Mammary epithelial cell (primary cell): ENCODE measurements at regions of chr11 and their contacts with region 1.

Region 1: GRCh38 chr11:134110252-134110815 is 41.5 kb downstream of the JAM3 start:
- DNase-seq: no peak
- H3K4me3 ChIP-seq: no peak overlapping the region
- H3K27ac ChIP-seq: no peak overlapping the region
- H3K4me1 ChIP-seq: no peaks in the 10 kb centered on the region
- H3K27me3 ChIP-seq: no peaks in the 10 kb centered on the region
- CTCF ChIP-seq: no peak

Region 2: DNA sequence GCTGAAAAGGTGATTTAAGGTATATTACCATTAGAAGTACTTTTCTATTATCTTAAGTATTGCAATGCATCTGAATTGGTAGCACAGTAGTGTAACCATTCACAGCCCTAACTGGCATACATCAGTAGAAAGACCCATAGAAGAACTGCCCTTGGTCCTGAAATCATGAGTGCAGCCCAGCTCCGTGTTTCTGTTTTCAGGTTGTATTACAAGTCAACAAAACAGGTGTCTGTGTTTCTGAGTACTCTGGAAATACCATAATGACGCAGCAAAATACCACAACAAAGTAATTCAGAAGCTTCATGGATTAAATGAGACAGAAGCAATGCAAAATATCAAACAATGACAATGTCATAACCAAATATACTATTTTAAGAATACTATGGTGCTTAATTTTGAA is 804.3 kb before region 1 on chr11:
- CTCF ChIA-PET with region 1: no interaction called
- dilution Hi-C with region 1: no loop called
- in situ Hi-C with region 1: no loop called
- intact Hi-C with region 1: no loop called
- DNase-seq: peak; percentile 1
- H3K4me3 ChIP-seq: no peak overlapping the region
- H3K27ac ChIP-seq: no peak overlapping the region
- H3K4me1 ChIP-seq: no peaks in the 10 kb centered on the region
- H3K27me3 ChIP-seq: no peaks in the 10 kb centered on the region
- CTCF ChIP-seq: no peak

Region 3: DNA sequence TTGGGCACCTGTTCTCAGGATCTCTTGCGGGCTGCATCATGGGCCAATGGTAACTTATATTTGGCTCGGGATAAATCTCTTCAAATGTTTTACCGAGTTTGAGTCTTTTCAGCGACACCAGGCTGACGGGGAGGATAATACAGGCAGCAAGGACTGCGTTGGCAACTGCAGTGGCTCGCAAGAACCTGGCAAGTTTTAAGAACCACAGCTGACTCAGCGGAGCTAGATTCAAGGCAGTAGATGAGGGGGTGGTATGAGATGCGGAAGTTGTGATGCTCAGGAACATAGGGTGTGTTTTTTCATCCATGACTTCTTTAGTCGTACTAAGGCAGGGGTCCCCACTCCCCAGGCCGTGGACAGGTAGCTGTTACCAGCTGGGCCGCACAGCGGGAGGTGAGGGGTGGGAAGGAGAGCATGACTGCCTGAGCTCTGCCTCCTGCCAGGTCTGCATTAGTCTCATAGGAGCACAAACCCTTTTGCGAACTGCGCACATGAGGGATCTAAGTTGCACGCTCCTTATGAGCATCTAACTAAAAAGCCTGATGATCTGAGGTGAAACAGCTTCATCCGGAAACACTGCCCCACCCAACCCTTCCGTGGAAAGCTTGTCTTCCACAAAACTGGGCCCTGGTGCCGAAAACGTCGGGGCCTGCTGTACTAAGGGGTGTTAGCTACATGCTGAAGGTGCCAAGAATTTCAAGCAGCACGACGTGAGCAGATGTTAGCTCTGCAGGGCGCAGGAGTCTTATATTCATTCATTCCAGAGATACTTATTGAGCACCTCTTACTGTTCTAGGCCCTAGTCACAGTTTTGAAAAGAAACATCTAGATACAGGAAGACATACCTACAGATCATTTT is 47.8 kb before region 1 on chr11:
- CTCF ChIA-PET with region 1: no interaction called
- dilution Hi-C with region 1: loop called (anchors 5 kb)
- in situ Hi-C with region 1: no loop called
- intact Hi-C with region 1: no loop called
- DNase-seq: no peak
- H3K4me3 ChIP-seq: no peak overlapping the region
- H3K27ac ChIP-seq: no peak overlapping the region
- H3K4me1 ChIP-seq: no peaks in the 10 kb centered on the region
- H3K27me3 ChIP-seq: no peaks in the 10 kb centered on the region
- CTCF ChIP-seq: no peak